Activated CD8-positive, alpha-beta T cell treated with anti-CD3 and anti-CD28 coated beads, Interleukin-2, amount 10 ng/mL, durations not matched to agents 7 days and 5 days (primary cell): ENCODE measurements at regions of chr3 and their contacts with region 1.

Region 1: GRCh38 chr3:38521391-38521987 is 25.3 kb downstream of the EXOG start:
- DNase-seq: peak; percentile 75
- ATAC-seq: peak; percentile 59
- H3K4me3 Mint-ChIP-seq: no peak overlapping the region
- H3K27ac Mint-ChIP-seq: no peak overlapping the region
- H3K4me1 Mint-ChIP-seq: peaks cover 35% of the 10 kb centered on the region
- H3K27me3 Mint-ChIP-seq: no peaks in the 10 kb centered on the region

Region 2: GRCh38 chr3:38346587-38347410 is 174.7 kb before region 1 on chr3 and contains the start of gene XYLB:
- CTCF ChIA-PET with region 1: interaction called, 12 read pairs
- POLR2A ChIA-PET with region 1: no interaction called
- DNase-seq: peak; percentile 86
- ATAC-seq: peak; percentile 99
- H3K4me3 Mint-ChIP-seq: peak within 1 kb of the TSS; percentile 75
- H3K27ac Mint-ChIP-seq: peak within 1 kb of the TSS; percentile 53
- H3K4me1 Mint-ChIP-seq: peaks cover 18% of the 10 kb centered on the region
- H3K27me3 Mint-ChIP-seq: peaks cover 3% of the 10 kb centered on the region
- total RNA-seq, gene XYLB: 5.3 to 6.1 TPM

Region 3: GRCh38 chr3:38411591-38411990 is 109.9 kb before region 1 on chr3:
- CTCF ChIA-PET with region 1: no interaction called
- POLR2A ChIA-PET with region 1: no interaction called
- DNase-seq: no peak
- ATAC-seq: no peak
- H3K4me3 Mint-ChIP-seq: no peak overlapping the region
- H3K27ac Mint-ChIP-seq: no peak overlapping the region
- H3K4me1 Mint-ChIP-seq: no peaks in the 10 kb centered on the region
- H3K27me3 Mint-ChIP-seq: no peaks in the 10 kb centered on the region

Region 4: GRCh38 chr3:38496131-38496910 is 25.2 kb before region 1 on chr3 and contains the start of gene EXOG:
- CTCF ChIA-PET with region 1: interaction called, 118 read pairs
- POLR2A ChIA-PET with region 1: interaction called, 8 read pairs
- DNase-seq: peak; percentile 97
- ATAC-seq: peak; percentile 94
- H3K4me3 Mint-ChIP-seq: peak within 1 kb of the TSS; percentile 89
- H3K27ac Mint-ChIP-seq: peak within 1 kb of the TSS; percentile 86
- H3K4me1 Mint-ChIP-seq: peaks cover 26% of the 10 kb centered on the region
- H3K27me3 Mint-ChIP-seq: no peaks in the 10 kb centered on the region
- total RNA-seq, gene EXOG: 18.5 to 23.0 TPM

Region 5: DNA sequence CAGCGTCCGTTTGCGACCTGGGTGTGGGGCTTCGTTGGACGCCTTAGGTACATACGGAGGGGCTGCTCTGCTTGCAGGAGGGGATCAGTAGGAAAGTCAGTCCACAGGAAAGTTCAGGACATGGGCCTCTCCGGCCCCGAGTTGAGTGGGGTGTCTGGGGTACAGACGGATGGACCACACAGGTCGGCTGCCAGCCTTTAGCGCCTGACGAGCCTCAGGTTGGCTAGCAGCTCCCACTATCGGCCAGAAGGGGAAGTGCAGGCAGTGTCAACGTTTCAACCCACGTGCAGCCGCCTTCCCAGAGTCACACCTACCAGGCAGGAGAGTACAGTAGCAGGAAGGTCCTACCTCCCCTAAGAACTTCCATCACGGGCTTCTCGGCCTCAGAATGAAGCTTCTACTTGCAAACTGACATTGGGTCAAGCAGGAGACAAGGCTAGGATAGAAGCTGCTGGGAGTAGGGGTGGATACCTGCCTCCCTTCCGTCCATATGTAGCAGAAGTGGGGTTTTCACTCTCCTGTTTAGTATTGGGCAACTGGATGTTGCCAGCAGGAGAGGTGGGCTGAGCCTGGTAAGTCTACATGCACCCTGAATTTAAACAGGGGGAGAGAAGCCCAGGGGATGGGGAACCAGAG is 129.8 kb after region 1 on chr3:
- CTCF ChIA-PET with region 1: interaction called, 190 read pairs
- POLR2A ChIA-PET with region 1: no interaction called
- DNase-seq: peak; percentile 80
- ATAC-seq: peak; percentile 57
- H3K4me3 Mint-ChIP-seq: no peak overlapping the region
- H3K27ac Mint-ChIP-seq: no peak overlapping the region
- H3K4me1 Mint-ChIP-seq: peaks cover 4% of the 10 kb centered on the region
- H3K27me3 Mint-ChIP-seq: peaks cover 17% of the 10 kb centered on the region

Region 6: GRCh38 chr3:38843898-38844297 is 322.4 kb after region 1 on chr3:
- CTCF ChIA-PET with region 1: interaction called, 21 read pairs
- POLR2A ChIA-PET with region 1: no interaction called
- DNase-seq: peak; percentile 27
- ATAC-seq: peak; percentile 42
- H3K4me3 Mint-ChIP-seq: no peak overlapping the region
- H3K27ac Mint-ChIP-seq: no peak overlapping the region
- H3K4me1 Mint-ChIP-seq: no peaks in the 10 kb centered on the region
- H3K27me3 Mint-ChIP-seq: peaks cover 16% of the 10 kb centered on the region

Region 7: DNA sequence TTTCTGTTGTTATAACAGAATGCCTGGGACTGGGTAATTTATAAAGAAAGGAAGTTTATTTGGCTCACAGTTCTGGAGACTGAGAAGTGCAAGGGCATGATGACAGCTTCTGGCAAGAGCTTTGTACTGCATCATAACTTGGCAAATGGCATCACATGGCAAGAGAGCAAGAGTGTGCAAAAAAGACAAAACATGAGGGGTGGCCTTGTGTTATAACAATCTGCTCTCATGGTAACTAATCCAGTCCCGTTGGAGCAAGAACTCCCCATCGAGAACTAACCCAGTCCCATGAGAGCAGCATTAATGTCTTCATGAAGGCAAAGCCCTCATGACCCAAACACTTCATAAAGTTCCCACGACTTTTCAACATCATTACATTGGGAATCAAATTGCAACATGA is 507.1 kb after region 1 on chr3:
- CTCF ChIA-PET with region 1: interaction called, 17 read pairs
- POLR2A ChIA-PET with region 1: no interaction called
- DNase-seq: no peak
- ATAC-seq: no peak
- H3K4me3 Mint-ChIP-seq: no peak overlapping the region
- H3K27ac Mint-ChIP-seq: no peak overlapping the region
- H3K4me1 Mint-ChIP-seq: no peaks in the 10 kb centered on the region
- H3K27me3 Mint-ChIP-seq: peaks cover 17% of the 10 kb centered on the region